Testis (tissue), 5 donors: ENCODE measurements at regions of chr7 and their contacts with region 1.

Region 1: GRCh38 chr7:23181684-23182553 is at the start of gene NUP42:
- DNase-seq: peak; percentile 96
- H3K4me3 ChIP-seq: peak within 1 kb of the TSS; percentile 75 to 93
- H3K27ac ChIP-seq: peak within 1 kb of the TSS; percentile 78 to 83
- H3K4me1 ChIP-seq: peaks cover 8% of the 10 kb centered on the region
- H3K27me3 ChIP-seq: no peaks in the 10 kb centered on the region
- CTCF ChIP-seq: peak in 1 of 3 experiments; percentile 47
- POLR2A ChIP-seq: no peak
- total RNA-seq, gene NUP42: 63.3 to 70.4 TPM

Region 2: DNA sequence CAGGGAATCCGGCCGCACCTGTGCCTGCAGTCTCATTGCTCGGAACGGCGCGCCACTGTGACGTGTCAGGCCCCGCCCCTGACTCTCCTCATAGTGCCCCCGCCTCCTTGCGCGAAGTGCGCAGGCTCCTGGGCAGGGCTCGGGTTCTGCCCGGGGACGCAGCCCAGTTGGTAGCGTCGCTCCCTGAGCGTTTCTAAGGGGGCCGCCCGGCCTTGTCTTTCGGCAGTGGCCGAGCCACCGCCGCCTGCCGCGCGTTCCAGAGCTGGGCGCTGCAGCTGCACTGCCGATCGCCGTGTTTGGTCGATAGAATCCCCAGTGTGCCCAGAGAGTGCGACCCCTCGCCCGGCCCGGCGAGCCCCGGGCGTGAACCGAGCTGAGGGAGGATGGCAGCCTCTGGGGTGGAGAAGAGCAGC is 76.3 kb before region 1 on chr7 and contains the start of gene KLHL7:
- intact Hi-C with region 1: loop called (anchors 10 kb)
- DNase-seq: peak; percentile 99
- H3K4me3 ChIP-seq: peak within 1 kb of the TSS; percentile 89 to 98
- H3K27ac ChIP-seq: peak within 1 kb of the TSS; percentile 92 to 95
- H3K4me1 ChIP-seq: peaks cover 6% of the 10 kb centered on the region
- H3K27me3 ChIP-seq: no peaks in the 10 kb centered on the region
- CTCF ChIP-seq: peak in 1 of 3 experiments; percentile 6
- POLR2A ChIP-seq: peak; percentile 67
- total RNA-seq, gene KLHL7: 85.3 to 135 TPM